ENCODE measurements at regions of chr3 and their contacts with region 1.

Region 1: DNA sequence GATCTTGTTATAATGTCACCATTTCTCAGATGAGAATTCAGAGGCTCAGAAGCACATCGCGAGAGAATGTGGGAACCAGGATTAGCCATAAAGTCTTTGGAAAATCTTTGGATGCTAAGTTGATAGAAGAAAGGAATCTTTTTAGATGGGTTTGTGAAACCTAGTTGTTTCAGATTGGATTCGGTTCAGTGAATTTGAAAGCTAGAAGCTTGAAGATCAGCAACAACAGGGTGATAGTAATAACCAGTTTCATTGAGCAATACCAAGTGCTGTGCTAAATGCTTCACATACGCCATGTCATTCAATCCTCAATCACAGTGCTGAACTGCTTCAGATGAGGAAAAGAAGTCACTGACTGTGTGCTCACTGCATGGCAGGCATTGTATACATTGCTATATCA is 47.4 kb upstream of the MITF start:
- DNase-seq: no peak
- ATAC-seq: peak; percentile 27

Region 2: DNA sequence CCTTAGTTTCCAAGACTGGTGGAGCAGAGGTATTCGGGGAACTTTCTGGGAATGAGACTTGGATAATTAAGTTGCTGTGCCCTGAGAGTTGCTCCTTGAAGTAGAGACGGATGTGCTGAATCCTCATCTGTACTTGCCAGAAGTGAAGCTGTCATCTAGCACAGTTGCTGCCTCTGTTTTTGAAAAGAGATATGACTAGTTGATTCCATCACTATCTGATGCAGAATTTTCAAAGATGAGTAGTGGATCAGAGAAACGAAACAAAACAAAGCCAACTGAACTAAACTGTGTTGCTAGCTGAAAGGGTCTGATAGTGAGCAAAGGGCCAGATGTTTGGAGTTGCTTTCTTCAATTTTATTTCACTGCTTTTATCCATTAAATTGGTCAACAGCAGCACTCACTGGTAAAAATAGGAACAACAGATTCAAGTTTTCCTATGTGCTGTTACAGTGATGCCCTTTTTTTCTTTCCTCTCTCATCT is 100.1 kb after region 1 on chr3:
- intact Hi-C with region 1: loop called (anchors 5 kb)
- DNase-seq: no peak
- ATAC-seq: peak; percentile 78

Region 3: GRCh38 chr3:69855436-69856162 is 163.7 kb after region 1 on chr3:
- intact Hi-C with region 1: loop called (anchors 5 kb)
- DNase-seq: no peak
- ATAC-seq: peak; percentile 70

Region 4: DNA sequence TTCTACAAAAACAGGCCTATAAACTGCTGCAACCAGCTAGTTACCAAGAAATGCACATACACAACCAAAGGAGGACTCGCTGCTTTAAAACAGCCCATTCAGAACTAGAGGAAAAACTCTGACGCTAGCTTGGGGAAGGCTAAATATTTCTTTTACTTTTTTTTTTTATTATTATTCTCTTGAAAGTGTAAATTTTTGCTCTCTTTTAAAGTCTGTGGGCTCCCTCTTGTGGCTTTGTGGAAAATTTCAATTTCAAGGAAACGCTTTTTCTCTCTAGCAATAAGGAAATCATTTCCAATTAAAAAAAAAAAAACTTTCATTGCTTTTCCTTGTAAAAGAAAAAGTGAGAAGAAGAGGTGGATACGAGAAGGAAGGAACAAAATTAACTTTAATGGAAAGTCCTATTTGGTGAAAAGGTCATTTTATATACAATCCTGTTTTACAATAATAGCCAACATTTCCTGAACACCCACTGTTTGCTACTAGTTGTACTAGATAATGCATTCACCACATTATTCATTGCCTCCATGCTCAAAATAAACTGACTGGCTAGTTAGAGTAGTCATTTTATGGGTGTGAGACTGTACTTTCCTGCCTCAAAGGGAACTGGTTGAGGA is 256.5 kb after region 1 on chr3:
- intact Hi-C with region 1: loop called (anchors 5 kb)
- DNase-seq: no peak
- ATAC-seq: peak; percentile 8

Measured in Right ventricle myocardium superior (tissue), 1 donor.